ENCODE measurements at regions of chr4 and their contacts with region 1.

Region 1: DNA sequence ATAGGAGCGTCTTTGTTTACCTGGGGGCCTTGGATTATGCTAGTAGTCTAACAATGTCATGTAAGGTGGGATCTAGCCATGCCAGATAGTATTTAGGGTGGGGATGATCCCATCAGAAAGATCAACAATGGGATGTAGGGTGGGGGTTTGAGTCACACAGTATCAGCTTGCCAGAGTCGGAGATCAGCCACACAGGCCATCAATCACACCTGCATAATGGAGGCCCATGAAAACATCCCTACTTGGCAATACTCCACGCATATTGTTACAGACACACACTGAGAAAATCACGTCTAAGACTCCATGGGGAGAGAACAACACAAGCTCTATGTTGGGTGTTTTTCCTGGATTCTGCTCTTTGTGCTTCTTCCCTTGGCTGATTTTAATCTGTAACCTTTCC is 49.5 kb upstream of the SLC25A4 start:
- DNase-seq: no peak
- H3K4me3 ChIP-seq: no peak overlapping the region
- H3K27ac ChIP-seq: no peak overlapping the region
- H3K4me1 ChIP-seq: no peaks in the 10 kb centered on the region
- H3K27me3 ChIP-seq: no peaks in the 10 kb centered on the region
- CTCF ChIP-seq: no peak
- POLR2A ChIP-seq: no peak

Region 2: DNA sequence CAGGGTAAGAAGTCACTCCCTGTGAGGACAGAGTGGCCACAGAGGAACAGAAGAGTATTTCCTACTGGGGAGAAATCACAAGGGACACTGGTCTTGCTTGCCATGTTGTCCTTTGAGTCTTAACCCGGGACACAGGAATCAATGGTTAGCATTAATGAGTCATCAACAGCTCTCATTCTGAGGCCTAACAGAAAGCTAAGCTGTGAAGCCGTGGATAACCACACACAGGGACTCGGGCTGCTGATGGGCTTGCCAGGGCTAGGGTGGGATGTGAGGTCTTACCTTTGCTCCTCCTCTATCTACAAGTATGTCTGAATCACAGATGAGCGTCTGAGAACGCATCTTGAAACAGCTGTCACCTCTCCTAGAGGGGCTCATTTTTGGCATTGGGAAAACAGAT is 53.1 kb before region 1 on chr4:
- intact Hi-C with region 1: loop called (anchors 5 kb)
- DNase-seq: no peak
- H3K4me3 ChIP-seq: no peak overlapping the region
- H3K27ac ChIP-seq: no peak overlapping the region
- H3K4me1 ChIP-seq: peaks cover 7% of the 10 kb centered on the region
- H3K27me3 ChIP-seq: no peaks in the 10 kb centered on the region
- CTCF ChIP-seq: no peak
- POLR2A ChIP-seq: no peak

Measured in vagina (tissue), 2 donors.